ENCODE measurements at regions of chr16 and their contacts with region 1.

Region 1: DNA sequence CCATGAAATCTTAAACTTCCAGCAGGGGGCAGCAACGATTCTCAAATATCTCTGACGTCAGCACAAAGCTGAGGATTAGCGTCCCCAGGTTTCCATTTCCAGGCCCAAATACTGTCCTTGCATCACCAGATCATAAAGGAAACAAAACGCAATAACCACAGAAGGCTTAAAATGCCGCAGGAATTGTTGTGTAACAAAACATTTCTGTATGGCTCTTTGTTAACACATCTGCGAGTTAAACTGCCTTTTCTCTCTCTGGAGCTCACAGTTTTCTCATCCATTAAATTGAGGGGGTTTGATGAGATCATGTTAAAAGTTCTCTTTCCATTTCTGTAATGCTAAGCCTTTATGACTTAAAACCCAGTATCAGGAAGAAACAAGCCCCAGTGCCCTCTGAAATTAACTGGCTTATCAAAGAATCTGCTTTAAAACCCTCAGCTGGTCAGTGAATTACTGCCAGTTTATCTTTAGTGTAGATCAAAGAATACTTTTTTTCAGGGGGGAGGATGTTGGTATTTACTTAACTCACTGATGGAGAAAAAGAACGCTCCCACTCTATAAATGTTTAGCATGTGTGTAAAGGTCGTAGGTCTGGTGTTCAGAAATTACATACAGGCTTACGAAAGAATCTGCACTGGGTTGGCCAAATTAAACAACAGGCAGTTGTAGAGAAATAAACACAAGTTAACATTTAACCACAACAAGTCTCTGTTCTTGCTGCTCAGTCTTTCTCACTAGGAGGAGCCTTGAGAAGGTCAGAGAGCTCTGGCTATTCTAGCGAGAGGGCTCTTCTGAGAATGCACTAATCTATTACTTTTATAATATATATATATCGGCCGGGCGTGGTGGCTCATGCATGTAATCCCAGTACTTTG is 10.6 kb upstream of the TERF2 start:
- DNase-seq: peak; percentile 59 to 97
- ATAC-seq: peak; percentile 80 to 81
- H3K4me3 ChIP-seq: peak overlapping the region; percentile 30; the same call in 2 of the 3 replicates
- H3K27ac ChIP-seq: peak overlapping the region; percentile 90 to 95
- H3K4me1 ChIP-seq: peaks cover 61% of the 10 kb centered on the region
- CTCF ChIP-seq: peak; percentile 83
- EP300 ChIP-seq: peak; percentile 98
- POLR2A ChIP-seq: no peak
- RAD21 ChIP-seq: peak; percentile 81 to 83

Region 2: GRCh38 chr16:69417520-69418199 is 21.2 kb after region 1 on chr16:
- CTCF ChIA-PET with region 1: interaction called, 67 read pairs
- POLR2A ChIA-PET with region 1: interaction called, 3 read pairs
- DNase-seq: peak; percentile 78 to 96
- ATAC-seq: peak; percentile 91 to 97
- H3K4me3 ChIP-seq: peak overlapping the region; percentile 12; the same call in 1 of the 3 replicates
- H3K27ac ChIP-seq: peak overlapping the region; percentile 80 to 86
- H3K4me1 ChIP-seq: peaks cover 62% of the 10 kb centered on the region
- CTCF ChIP-seq: no peak
- EP300 ChIP-seq: peak; percentile 48 to 50; a peak in 3 of 5 replicates
- POLR2A ChIP-seq: peak; percentile 5; the same call in 1 of the 2 replicates
- RAD21 ChIP-seq: no peak; a peak in 1 of 5 replicates

Region 3: DNA sequence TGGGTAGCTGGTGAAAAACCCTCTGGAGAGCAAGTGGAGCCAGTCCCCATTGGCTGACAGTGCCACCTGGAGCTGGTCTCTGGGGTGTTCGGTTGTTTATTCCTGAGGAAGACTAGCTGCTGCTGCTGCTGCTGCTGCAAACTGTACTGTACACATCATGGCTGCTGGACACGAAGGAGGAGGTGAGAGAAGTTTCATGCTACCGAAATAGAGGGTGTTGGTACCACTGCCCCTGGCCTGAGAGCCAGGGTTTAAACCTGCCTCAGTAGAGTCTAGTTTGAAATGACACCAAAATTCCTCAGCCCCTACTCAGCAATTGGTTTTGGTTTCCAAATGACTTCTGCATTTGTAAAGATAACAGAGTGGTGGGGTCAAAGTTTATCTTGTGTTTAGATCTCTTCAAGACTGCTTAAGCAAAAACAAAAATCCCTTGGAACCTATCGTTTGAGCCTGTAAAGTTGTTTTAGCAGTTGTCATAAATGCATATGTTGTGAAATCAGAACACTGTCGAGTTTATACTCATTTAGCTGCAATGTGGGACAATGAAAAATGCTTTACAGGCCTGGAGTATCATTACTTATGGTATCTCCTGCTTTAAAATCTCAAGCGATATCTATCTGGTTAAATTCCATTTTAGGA is 68.8 kb after region 1 on chr16:
- CTCF ChIA-PET with region 1: interaction called, 15 read pairs
- POLR2A ChIA-PET with region 1: no interaction called
- DNase-seq: peak in 1 of 2 experiments; percentile 33
- ATAC-seq: peak; percentile 59 to 66; a peak in 4 of 6 replicates
- H3K4me3 ChIP-seq: no peak overlapping the region
- H3K27ac ChIP-seq: peak overlapping the region; percentile 2 to 82; a peak in 5 of 6 replicates
- H3K4me1 ChIP-seq: peaks cover 64% of the 10 kb centered on the region
- CTCF ChIP-seq: no peak; the same call in 2 of the 3 replicates
- EP300 ChIP-seq: no peak
- POLR2A ChIP-seq: no peak
- RAD21 ChIP-seq: peak; percentile 38 to 45

Region 4: DNA sequence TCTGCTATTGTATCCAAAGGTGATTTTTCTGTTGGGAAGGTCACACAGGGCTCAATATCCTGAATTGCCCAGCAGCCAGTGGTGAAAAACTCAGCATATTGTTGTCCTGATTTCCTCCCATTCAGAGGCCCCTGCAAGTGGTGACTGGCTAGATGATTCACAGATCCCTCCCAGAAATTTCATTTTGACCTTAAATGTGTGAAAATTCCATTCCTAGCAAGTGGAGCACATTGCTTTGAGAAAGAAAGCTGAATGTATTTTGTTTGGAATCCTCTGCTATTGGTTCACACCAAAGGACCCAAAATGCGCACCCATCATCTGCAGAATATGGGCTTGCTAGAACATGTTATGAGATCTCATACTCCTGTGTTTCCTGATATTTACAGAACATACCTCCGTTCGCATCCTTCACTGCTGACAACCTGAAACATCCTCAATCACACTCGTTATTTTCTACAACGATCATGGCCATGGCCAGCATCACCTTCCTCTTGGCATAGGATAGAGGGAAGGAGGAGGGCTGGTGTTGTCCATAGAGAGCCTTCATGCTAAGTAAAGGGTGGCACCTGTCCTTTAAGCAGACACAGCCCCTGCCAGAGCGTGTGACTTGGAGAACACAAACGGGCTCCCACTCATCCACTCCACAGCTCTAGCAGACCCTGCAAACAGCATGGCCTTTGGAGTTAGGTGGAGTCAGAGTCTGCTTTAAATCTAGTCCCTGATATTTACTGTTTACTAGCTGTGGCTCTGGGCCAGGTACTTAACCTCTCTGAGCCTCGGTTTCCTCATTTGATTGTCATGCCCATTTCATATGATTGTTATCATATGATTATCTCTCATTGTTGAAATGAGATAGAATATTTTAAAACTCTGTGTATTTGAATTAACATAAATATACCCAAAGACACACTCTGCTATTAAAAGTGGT is 139.0 kb after region 1 on chr16:
- CTCF ChIA-PET with region 1: interaction called, 7 read pairs
- POLR2A ChIA-PET with region 1: interaction called, 13 read pairs
- DNase-seq: no peak
- ATAC-seq: no peak
- H3K4me3 ChIP-seq: no peak overlapping the region
- H3K27ac ChIP-seq: peak overlapping the region; percentile 85 to 97
- H3K4me1 ChIP-seq: peaks cover 63% of the 10 kb centered on the region
- CTCF ChIP-seq: no peak
- EP300 ChIP-seq: no peak
- POLR2A ChIP-seq: no peak
- RAD21 ChIP-seq: no peak

Region 5: DNA sequence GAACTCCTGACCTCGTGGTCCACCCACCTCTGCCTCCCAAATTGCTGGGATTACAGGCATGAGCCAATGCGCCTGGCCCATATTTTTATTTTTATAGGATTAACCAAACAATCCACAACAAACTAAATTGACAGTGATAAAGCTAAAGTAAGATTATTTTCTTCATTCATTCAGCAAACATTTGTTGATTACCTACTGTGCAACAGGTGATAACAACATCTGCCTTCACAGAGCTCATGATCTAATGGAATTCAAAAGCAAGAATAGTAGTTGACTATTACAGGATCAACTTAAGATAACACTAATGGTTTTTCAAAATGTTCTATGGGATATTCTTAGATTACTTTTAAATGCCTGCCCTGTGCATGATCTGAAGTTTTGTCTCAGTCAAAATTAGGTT is 292.2 kb after region 1 on chr16:
- CTCF ChIA-PET with region 1: interaction called, 10 read pairs
- POLR2A ChIA-PET with region 1: no interaction called
- DNase-seq: no peak
- ATAC-seq: no peak
- H3K4me3 ChIP-seq: no peak overlapping the region
- H3K27ac ChIP-seq: no peak overlapping the region
- H3K4me1 ChIP-seq: peaks cover 4% of the 10 kb centered on the region; the same call in 1 of the 3 replicates
- CTCF ChIP-seq: no peak
- EP300 ChIP-seq: no peak
- POLR2A ChIP-seq: no peak
- RAD21 ChIP-seq: no peak

Region 6: GRCh38 chr16:69709456-69710084 is 313.1 kb after region 1 on chr16:
- CTCF ChIA-PET with region 1: interaction called, 36 read pairs
- POLR2A ChIA-PET with region 1: interaction called, 3 read pairs
- DNase-seq: peak; percentile 58 to 73
- ATAC-seq: peak in 1 of 2 experiments; percentile 5; a peak in 1 of 6 replicates
- H3K4me3 ChIP-seq: no peak overlapping the region
- H3K27ac ChIP-seq: peak overlapping the region in 1 of 2 experiments; percentile 44; a peak in 3 of 6 replicates
- H3K4me1 ChIP-seq: peaks cover 59% of the 10 kb centered on the region
- CTCF ChIP-seq: peak; percentile 78
- EP300 ChIP-seq: no peak
- POLR2A ChIP-seq: no peak
- RAD21 ChIP-seq: peak; percentile 68 to 72

Region 7: GRCh38 chr16:69754469-69755310 is 358.3 kb after region 1 on chr16 and contains the start of gene NOB1:
- CTCF ChIA-PET with region 1: interaction called, 58 read pairs
- POLR2A ChIA-PET with region 1: interaction called, 28 read pairs
- DNase-seq: peak; percentile 88 to 98
- ATAC-seq: peak; percentile 98
- H3K4me3 ChIP-seq: peak within 1 kb of the TSS; percentile 85
- H3K27ac ChIP-seq: peak within 1 kb of the TSS; percentile 82 to 94
- H3K4me1 ChIP-seq: peaks cover 18% of the 10 kb centered on the region; the same call in 2 of the 3 replicates
- CTCF ChIP-seq: peak; percentile 95
- EP300 ChIP-seq: no peak
- POLR2A ChIP-seq: peak; percentile 97
- RAD21 ChIP-seq: peak; percentile 87 to 95
- polyA plus RNA-seq, gene NOB1: 120 and 134 TPM in 2 replicates